AG04450 (cell line): ENCODE measurements at regions of chr3 and their contacts with region 1.

Region 1: GRCh38 chr3:30199096-30199759 is 407.2 kb upstream of the TGFBR2 start:
- DNase-seq: no peak
- H3K4me3 ChIP-seq: no peak overlapping the region
- H3K27ac ChIP-seq: no peak overlapping the region
- H3K27me3 ChIP-seq: no peaks in the 10 kb centered on the region
- CTCF ChIP-seq: peak; percentile 73

Region 2: DNA sequence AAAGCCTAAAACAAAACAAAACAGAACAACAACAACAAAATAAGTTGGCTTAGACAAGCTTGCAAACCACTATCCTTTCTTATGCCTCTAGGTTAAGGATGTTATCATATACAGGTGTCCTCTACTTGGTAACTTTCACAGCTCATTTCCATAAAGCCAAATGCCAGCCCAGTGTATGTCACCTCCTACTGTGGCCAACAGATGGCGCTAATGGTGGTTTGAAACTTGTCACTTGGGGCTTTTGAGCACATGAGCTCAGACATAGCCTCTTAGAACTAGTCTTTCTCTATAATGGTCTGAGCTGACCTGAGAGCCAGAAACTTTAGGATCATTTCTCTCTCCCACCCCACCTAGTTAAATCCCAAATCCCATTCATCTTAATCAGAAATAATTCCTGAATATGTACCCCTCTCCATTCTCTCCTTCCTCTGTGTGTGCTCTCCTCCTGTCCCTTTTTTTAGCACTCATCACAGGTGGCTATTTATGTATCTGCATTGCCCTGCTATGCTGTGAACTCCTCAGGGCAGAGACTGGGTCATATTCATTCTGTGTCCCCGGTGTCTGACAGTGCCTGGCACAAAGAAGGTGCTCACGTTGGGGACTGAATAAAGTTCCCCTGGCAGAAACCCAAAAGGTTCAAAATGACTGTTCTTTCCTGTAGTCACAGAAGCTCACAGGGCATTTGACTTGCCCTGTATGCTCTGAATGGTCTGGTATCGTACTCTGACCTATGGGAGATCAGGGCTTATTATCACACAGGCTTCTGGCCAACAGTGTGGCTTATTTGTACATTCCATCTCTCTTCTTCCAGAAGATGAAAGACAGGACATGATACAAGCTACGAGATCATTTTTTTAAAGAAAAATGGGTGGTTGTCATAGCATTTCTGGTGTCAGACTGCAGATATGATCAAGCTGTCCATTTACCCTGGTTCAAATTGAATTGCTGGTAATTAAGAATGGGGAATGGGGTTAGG is 1531.3 kb before region 1 on chr3:
- CTCF ChIA-PET with region 1: interaction called, 12 read pairs
- POLR2A ChIA-PET with region 1: no interaction called
- DNase-seq: peak; percentile 36
- H3K4me3 ChIP-seq: no peak overlapping the region
- H3K27ac ChIP-seq: no peak overlapping the region
- H3K27me3 ChIP-seq: peaks cover 2% of the 10 kb centered on the region
- CTCF ChIP-seq: peak; percentile 82

Region 3: GRCh38 chr3:30042274-30042859 is 156.9 kb before region 1 on chr3:
- CTCF ChIA-PET with region 1: interaction called, 99 read pairs
- POLR2A ChIA-PET with region 1: no interaction called
- DNase-seq: peak; percentile 49
- H3K4me3 ChIP-seq: no peak overlapping the region
- H3K27ac ChIP-seq: no peak overlapping the region
- H3K27me3 ChIP-seq: no peaks in the 10 kb centered on the region
- CTCF ChIP-seq: peak; percentile 82

Region 4: DNA sequence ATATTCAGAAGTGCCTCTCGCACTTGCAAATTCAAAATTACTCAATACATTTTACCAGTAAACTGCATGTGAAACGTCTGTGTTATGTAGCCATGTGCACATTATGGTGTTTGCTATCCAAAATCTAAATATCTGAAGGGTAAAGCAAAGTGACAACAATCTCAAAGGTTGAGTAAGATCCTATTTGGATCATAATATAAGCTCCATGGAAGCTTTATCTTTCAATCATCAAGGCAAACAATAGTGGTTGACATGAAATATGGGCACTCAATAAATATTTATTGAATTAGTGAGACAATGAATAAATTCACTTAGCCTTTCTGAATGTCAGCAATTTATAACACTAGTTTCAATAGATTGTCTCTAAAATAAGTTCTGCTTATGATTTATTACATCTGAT is 48.3 kb before region 1 on chr3:
- CTCF ChIA-PET with region 1: interaction called, 16 read pairs
- POLR2A ChIA-PET with region 1: no interaction called
- DNase-seq: no peak
- H3K4me3 ChIP-seq: no peak overlapping the region
- H3K27ac ChIP-seq: no peak overlapping the region
- H3K27me3 ChIP-seq: no peaks in the 10 kb centered on the region
- CTCF ChIP-seq: no peak

Region 5: GRCh38 chr3:30180310-30181177 is 18.7 kb before region 1 on chr3:
- CTCF ChIA-PET with region 1: interaction called, 21 read pairs
- POLR2A ChIA-PET with region 1: no interaction called
- DNase-seq: no peak
- H3K4me3 ChIP-seq: no peak overlapping the region
- H3K27ac ChIP-seq: no peak overlapping the region
- H3K27me3 ChIP-seq: no peaks in the 10 kb centered on the region
- CTCF ChIP-seq: no peak

Region 6: GRCh38 chr3:30227571-30228301 is 28.5 kb after region 1 on chr3:
- CTCF ChIA-PET with region 1: interaction called, 10 read pairs
- POLR2A ChIA-PET with region 1: no interaction called
- DNase-seq: peak; percentile 46
- H3K4me3 ChIP-seq: no peak overlapping the region
- H3K27ac ChIP-seq: peak overlapping the region; percentile 74
- H3K27me3 ChIP-seq: no peaks in the 10 kb centered on the region
- CTCF ChIP-seq: no peak

Region 7: DNA sequence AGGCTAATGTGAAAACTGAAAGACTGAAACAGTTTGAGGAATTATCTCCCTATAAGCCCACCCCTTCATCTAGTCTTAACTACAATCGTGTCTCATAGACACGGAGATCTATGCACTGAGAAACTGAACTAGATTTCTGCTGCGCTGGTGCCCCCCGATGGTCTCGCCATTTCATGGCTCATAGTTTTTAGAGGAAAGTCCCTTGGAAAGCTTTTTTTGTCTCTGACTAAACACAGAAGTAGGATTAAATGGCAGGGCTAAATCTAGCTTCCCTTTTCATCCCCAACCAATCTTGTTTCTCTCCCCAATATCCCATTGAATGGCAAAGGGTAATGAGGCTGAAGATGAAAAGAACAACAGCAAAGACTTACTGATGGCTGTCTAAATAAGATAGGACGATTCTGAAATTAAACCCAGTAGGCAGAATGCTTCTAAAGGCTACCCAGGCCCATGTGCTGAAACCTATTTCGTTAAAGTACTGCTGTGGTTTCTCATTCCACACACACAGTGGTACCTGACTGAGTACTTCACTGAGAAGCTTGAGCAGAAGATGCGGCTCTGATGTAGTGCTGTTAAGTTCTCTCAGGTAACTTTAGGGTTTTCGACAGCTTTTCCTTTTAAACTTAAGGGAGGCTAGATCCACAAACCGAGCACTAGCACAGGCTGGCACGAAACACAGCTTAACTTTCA is 552.5 kb after region 1 on chr3:
- CTCF ChIA-PET with region 1: interaction called, 17 read pairs
- POLR2A ChIA-PET with region 1: no interaction called
- DNase-seq: no peak
- H3K4me3 ChIP-seq: no peak overlapping the region
- H3K27ac ChIP-seq: no peak overlapping the region
- H3K27me3 ChIP-seq: no peaks in the 10 kb centered on the region
- CTCF ChIP-seq: peak; percentile 60